HepG2 (cell line): ENCODE measurements at regions of chr19 and their contacts with region 1.

Region 1: DNA sequence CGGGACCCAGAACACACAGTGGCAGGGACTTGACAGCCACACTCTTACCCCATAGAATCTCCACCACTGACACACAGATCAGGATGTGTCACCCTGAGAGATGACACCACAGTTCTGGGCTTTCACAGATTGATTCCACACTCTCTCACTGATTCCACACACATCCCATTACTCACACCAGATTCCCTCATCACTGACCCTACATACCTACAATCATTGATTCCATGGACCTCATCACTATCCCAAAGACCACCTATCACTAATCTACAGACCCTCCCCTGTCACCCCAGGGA is 57.6 kb upstream of the ZNF527 start:
- DNase-seq: no peak
- ATAC-seq: no peak
- H3K4me3 ChIP-seq: peak overlapping the region; percentile 38 to 53 (median 40); a peak in 5 of 6 replicates
- H3K27ac ChIP-seq: no peak overlapping the region
- H3K4me1 ChIP-seq: peaks cover 7% of the 10 kb centered on the region
- H3K27me3 ChIP-seq: no peaks in the 10 kb centered on the region; a peak in 1 of 5 replicates
- CTCF ChIP-seq: no peak
- EP300 ChIP-seq: no peak
- POLR2A ChIP-seq: no peak
- RAD21 ChIP-seq: no peak

Region 2: GRCh38 chr19:37334179-37335071 is 21.1 kb after region 1 on chr19:
- CTCF ChIA-PET with region 1: no interaction called
- POLR2A ChIA-PET with region 1: no interaction called
- in situ Hi-C with region 1: no loop called
- intact Hi-C with region 1: no loop called
- DNase-seq: no peak
- ATAC-seq: no peak
- H3K4me3 ChIP-seq: no peak overlapping the region
- H3K27ac ChIP-seq: no peak overlapping the region
- H3K4me1 ChIP-seq: no peaks in the 10 kb centered on the region
- H3K27me3 ChIP-seq: no peaks in the 10 kb centered on the region
- CTCF ChIP-seq: no peak
- EP300 ChIP-seq: no peak
- POLR2A ChIP-seq: no peak
- RAD21 ChIP-seq: no peak

Region 3: GRCh38 chr19:37370880-37371661 is 57.8 kb after region 1 on chr19 and contains the start of gene ZNF527:
- CTCF ChIA-PET with region 1: no interaction called
- POLR2A ChIA-PET with region 1: interaction called, 17 read pairs
- in situ Hi-C with region 1: no loop called
- intact Hi-C with region 1: loop called (anchors 2 kb)
- DNase-seq: peak; percentile 96
- ATAC-seq: peak; percentile 98
- H3K4me3 ChIP-seq: peak within 1 kb of the TSS; percentile 58 to 86 (median 80)
- H3K27ac ChIP-seq: peak within 1 kb of the TSS; percentile 67
- H3K4me1 ChIP-seq: peaks cover 8% of the 10 kb centered on the region
- H3K27me3 ChIP-seq: no peaks in the 10 kb centered on the region; a peak in 1 of 5 replicates
- CTCF ChIP-seq: peak; percentile 24; the same call in 1 of the 2 replicates
- EP300 ChIP-seq: peak in 1 of 2 experiments; percentile 26; a peak in 1 of 4 replicates
- POLR2A ChIP-seq: peak in 1 of 2 experiments; percentile 85
- RAD21 ChIP-seq: peak; percentile 47; the same call in 1 of the 2 replicates
- total RNA-seq, gene ZNF527: 3.5 and 4.2 TPM in 2 replicates